ENCODE measurements at regions of chr11 and their contacts with region 1.

Region 1: DNA sequence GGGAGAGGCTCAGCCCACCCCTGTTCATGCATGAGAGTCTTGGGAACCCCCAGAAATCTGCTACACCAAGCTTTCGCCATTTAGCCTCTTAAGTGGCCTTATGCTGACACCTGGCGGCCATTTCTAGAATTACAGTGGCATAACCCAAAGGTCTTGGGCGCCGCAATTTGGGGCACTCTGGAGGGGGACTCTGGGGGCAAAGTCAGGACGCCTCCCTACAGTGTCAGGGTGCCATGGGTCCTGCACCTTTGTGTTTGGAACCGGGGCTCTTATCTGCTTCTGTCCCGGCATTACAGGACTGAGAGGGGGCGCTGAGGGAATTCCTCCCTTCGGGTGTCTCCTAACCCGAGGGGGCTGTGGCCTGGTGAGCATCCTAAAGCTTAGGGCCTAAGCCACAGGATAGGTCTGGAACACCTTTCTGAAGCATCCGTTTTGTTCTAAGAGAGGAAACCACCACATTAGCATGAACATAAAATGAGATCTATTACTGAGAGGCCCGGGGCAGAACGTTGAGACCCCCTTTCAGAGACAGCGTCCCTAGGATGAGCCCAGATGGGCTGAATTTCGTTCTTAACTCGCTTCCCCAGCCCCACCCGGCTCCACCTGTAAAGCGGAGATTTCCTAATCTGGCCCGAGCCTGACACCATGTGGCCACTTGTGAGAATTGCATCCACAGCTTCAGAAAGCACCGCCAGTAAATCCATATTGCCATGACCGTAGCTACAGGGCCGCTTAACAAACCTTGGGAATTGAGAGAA is 9.3 kb downstream of the INS start:
- DNase-seq: peak; percentile 91
- ATAC-seq: peak; percentile 82
- H3K4me3 Mint-ChIP-seq: no peak overlapping the region
- H3K27ac Mint-ChIP-seq: no peak overlapping the region
- H3K4me1 Mint-ChIP-seq: peaks cover 10% of the 10 kb centered on the region
- H3K27me3 Mint-ChIP-seq: peaks cover 36% of the 10 kb centered on the region
- CTCF ChIP-seq: peak; percentile 86

Region 2: DNA sequence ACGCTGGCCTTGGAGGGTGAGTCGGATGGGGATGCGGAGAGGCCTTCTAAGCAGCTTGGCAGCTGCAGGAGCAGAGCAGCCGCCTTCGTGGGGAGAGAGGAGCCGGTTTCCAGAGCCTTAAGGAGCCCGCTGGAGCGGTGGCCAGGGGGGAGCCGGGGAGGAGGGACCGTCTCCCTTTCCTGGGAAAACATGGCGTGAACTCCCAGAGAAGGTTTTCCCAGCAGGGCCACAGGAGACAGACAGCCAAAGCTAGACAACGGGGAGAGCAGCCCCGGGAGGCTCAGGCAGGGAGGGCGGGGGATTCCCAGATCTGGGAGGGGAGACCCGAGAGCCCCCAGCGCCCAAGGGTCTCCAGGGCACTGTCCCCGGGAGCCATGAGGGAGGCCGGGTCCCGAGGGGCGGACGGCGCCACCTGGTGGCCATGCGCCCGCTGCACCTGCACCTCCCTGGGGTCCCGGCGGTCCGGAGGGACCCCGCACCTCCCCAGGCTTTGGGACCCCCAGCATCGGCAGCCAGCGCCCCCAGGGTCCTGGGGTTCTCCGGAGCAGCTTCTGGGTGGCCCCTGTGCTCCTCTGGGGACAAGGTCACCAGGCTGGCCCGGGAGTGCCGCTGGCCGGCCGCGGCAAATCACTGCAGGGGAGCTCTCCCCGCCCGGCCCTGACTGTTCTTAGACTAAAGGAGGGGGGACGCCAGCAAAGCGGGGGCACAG is 319.3 kb before region 1 on chr11:
- CTCF ChIA-PET with region 1: interaction called, 21 read pairs
- POLR2A ChIA-PET with region 1: no interaction called
- intact Hi-C with region 1: no loop called
- DNase-seq: peak; percentile 70
- ATAC-seq: peak; percentile 79
- H3K4me3 Mint-ChIP-seq: no peak overlapping the region
- H3K27ac Mint-ChIP-seq: no peak overlapping the region
- H3K4me1 Mint-ChIP-seq: no peaks in the 10 kb centered on the region
- H3K27me3 Mint-ChIP-seq: no peaks in the 10 kb centered on the region
- CTCF ChIP-seq: peak; percentile 97

Region 3: DNA sequence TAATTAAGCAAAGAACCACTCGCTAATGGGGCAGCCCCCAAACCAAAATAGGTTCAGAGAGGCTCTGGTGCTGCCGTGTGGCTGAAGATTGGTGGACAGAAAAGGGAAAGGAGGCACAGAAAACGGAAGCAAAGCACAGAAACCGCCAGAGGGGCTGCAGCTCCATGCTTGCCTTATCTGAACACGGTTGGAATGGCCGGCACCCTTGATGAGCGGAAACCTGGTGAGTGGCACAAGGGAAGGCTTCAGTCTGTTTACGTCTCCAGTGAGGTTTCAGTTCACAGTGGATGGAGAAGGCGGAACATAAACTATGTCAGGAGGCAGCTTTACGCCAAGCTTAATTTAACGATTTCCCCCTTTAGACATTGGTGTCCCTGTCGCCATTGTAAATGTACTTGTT is 254.8 kb before region 1 on chr11:
- CTCF ChIA-PET with region 1: interaction called, 10 read pairs
- POLR2A ChIA-PET with region 1: no interaction called
- intact Hi-C with region 1: no loop called
- DNase-seq: no peak
- ATAC-seq: no peak
- H3K4me3 Mint-ChIP-seq: peak overlapping the region; percentile 36
- H3K27ac Mint-ChIP-seq: no peak overlapping the region
- H3K4me1 Mint-ChIP-seq: peaks cover 20% of the 10 kb centered on the region
- H3K27me3 Mint-ChIP-seq: peaks cover 15% of the 10 kb centered on the region
- CTCF ChIP-seq: no peak

Region 4: GRCh38 chr11:2077061-2077802 is 74.4 kb before region 1 on chr11:
- CTCF ChIA-PET with region 1: interaction called, 11 read pairs
- POLR2A ChIA-PET with region 1: no interaction called
- intact Hi-C with region 1: no loop called
- DNase-seq: peak; percentile 75
- ATAC-seq: peak; percentile 93
- H3K4me3 Mint-ChIP-seq: no peak overlapping the region
- H3K27ac Mint-ChIP-seq: peak overlapping the region; percentile 79
- H3K4me1 Mint-ChIP-seq: peaks cover 17% of the 10 kb centered on the region
- H3K27me3 Mint-ChIP-seq: peaks cover 19% of the 10 kb centered on the region
- CTCF ChIP-seq: no peak

Region 5: DNA sequence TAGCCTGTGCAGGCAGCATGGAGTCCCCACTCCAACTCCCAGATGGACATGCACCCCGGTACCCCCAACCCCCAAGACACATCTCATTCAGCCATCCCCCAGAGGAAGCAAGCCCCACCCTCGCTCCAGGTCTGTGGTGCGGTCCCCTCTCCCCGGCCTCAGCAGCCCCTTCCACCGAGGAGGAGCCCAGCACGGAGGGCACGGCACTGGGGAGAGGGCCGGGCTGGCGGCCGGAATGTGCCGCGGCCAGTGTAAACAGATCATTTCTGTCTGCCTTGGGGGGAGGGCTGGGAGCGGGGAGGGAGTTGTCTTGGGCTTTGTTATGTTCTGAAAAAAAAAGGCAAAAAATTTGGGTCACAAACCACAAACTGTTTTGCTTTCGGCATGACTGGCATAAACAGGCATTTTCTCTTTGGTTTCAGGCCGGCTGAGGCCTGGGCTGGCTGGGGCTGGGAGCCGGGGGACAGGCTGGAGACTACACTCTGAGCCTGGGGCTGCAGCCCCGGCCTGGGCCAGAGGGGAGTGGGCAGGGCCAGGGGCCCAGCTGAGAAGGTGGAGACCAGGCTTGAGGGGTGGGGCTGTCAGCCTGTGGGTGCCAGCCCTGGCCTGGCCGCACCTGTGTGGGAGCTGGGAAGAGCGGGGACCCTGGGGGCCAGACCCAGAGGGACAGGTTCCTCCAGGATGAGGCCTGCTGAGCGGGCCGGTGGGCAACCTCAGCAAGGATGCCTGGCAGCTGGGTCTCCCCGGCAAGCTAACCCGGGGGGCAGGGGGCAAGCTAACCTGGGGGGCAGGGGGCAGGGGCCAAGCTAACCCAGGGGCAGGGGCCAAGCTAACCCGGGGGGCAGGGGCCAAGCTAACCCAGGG is 29.2 kb before region 1 on chr11:
- CTCF ChIA-PET with region 1: interaction called, 14 read pairs
- POLR2A ChIA-PET with region 1: no interaction called
- intact Hi-C with region 1: no loop called
- DNase-seq: no peak
- ATAC-seq: no peak
- H3K4me3 Mint-ChIP-seq: no peak overlapping the region
- H3K27ac Mint-ChIP-seq: no peak overlapping the region
- H3K4me1 Mint-ChIP-seq: no peaks in the 10 kb centered on the region
- H3K27me3 Mint-ChIP-seq: peaks cover 16% of the 10 kb centered on the region
- CTCF ChIP-seq: no peak

Measured in activated CD8-positive, alpha-beta T cell treated with anti-CD3 and anti-CD28 coated beads for 36 hours (primary cell).